ENCODE measurements at regions of chr15 and their contacts with region 1.

Region 1: GRCh38 chr15:49620658-49621368 is at the starts of genes DTWD1 and FAM227B:
- DNase-seq: peak; percentile 99
- H3K4me3 ChIP-seq: peak within 1 kb of the TSS; percentile 70 to 91 (median 76)
- H3K27ac ChIP-seq: peak within 1 kb of the TSS; percentile 90 to 94 (median 92)
- H3K4me1 ChIP-seq: peaks cover 0 to 35% (median 23%) of the 10 kb centered on the region in 4 donors
- H3K27me3 ChIP-seq: no peaks in the 10 kb centered on the region
- CTCF ChIP-seq: no peak
- EP300 ChIP-seq: peak in 1 of 4 donors; percentile 68
- POLR2A ChIP-seq: peak; percentile 84 to 92
- total RNA-seq, gene DTWD1: 22.7 to 39.8 (median 33.7) TPM
- total RNA-seq, gene FAM227B: 11.1 to 21.1 (median 15.0) TPM

Region 2: GRCh38 chr15:49235446-49236124 is 385.2 kb before region 1 on chr15:
- intact Hi-C with region 1: loop called (anchors 5 kb)
- DNase-seq: peak; percentile 78
- H3K4me3 ChIP-seq: no peak overlapping the region
- H3K27ac ChIP-seq: peak overlapping the region; percentile 10 to 78 (median 68)
- H3K4me1 ChIP-seq: peaks cover 0 to 55% (median 45%) of the 10 kb centered on the region in 4 donors
- H3K27me3 ChIP-seq: no peaks in the 10 kb centered on the region
- CTCF ChIP-seq: peak; percentile 58 to 83 (median 66)
- EP300 ChIP-seq: no peak
- POLR2A ChIP-seq: no peak

Region 3: GRCh38 chr15:49669288-49669687 is 48.5 kb after region 1 on chr15:
- intact Hi-C with region 1: no loop called
- DNase-seq: no peak
- H3K4me3 ChIP-seq: no peak overlapping the region
- H3K27ac ChIP-seq: no peak overlapping the region
- H3K4me1 ChIP-seq: peaks cover 0 to under 1% (median 0%) of the 10 kb centered on the region in 4 donors
- H3K27me3 ChIP-seq: no peaks in the 10 kb centered on the region
- CTCF ChIP-seq: no peak
- EP300 ChIP-seq: no peak
- POLR2A ChIP-seq: no peak

Region 4: GRCh38 chr15:49741712-49742111 is 120.9 kb after region 1 on chr15:
- intact Hi-C with region 1: no loop called
- DNase-seq: no peak
- H3K4me3 ChIP-seq: no peak overlapping the region
- H3K27ac ChIP-seq: no peak overlapping the region
- H3K4me1 ChIP-seq: no peaks in the 10 kb centered on the region
- H3K27me3 ChIP-seq: no peaks in the 10 kb centered on the region
- CTCF ChIP-seq: no peak
- EP300 ChIP-seq: no peak
- POLR2A ChIP-seq: no peak

Region 5: DNA sequence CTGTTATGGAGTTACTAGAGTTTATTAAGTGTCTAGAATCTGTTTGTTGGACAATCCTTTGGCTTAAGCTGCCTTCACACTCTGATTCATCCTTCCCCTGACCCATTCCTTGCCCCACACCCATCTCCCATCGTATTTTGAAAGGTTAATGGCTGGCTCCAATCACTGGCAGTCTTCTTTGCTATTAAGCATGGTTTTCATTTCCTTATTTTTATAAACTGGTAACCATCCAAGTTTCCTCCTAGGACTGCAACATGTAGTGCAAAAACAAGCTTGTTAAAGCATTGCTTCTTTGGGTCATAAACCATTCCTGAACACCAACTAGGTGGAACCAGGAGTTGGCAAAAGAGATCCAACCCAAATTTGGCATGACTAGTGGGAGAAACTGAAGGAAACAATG is 148.4 kb after region 1 on chr15:
- intact Hi-C with region 1: loop called (anchors 5 kb)
- DNase-seq: no peak
- H3K4me3 ChIP-seq: no peak overlapping the region
- H3K27ac ChIP-seq: peak overlapping the region in 3 of 4 donors; percentile 27 to 52 (median 36)
- H3K4me1 ChIP-seq: peaks cover 0 to 13% (median 3%) of the 10 kb centered on the region in 4 donors
- H3K27me3 ChIP-seq: no peaks in the 10 kb centered on the region
- CTCF ChIP-seq: no peak
- EP300 ChIP-seq: no peak
- POLR2A ChIP-seq: no peak

Region 6: GRCh38 chr15:49901996-49902684 is 281.3 kb after region 1 on chr15:
- intact Hi-C with region 1: loop called (anchors 5 kb)
- DNase-seq: no peak
- H3K4me3 ChIP-seq: no peak overlapping the region
- H3K27ac ChIP-seq: peak overlapping the region; percentile 65 to 77 (median 73)
- H3K4me1 ChIP-seq: peaks cover 0 to 60% (median 50%) of the 10 kb centered on the region in 4 donors
- H3K27me3 ChIP-seq: no peaks in the 10 kb centered on the region
- CTCF ChIP-seq: peak in 1 of 4 experiments; percentile 17
- EP300 ChIP-seq: no peak
- POLR2A ChIP-seq: no peak

Region 7: GRCh38 chr15:50057905-50058639 is 437.3 kb after region 1 on chr15:
- intact Hi-C with region 1: loop called (anchors 2 kb)
- DNase-seq: no peak
- H3K4me3 ChIP-seq: no peak overlapping the region
- H3K27ac ChIP-seq: peak overlapping the region; percentile 52 to 61 (median 56)
- H3K4me1 ChIP-seq: peaks cover 0 to 43% (median 30%) of the 10 kb centered on the region in 4 donors
- H3K27me3 ChIP-seq: no peaks in the 10 kb centered on the region
- CTCF ChIP-seq: no peak
- EP300 ChIP-seq: no peak
- POLR2A ChIP-seq: no peak

Region 8: GRCh38 chr15:50077651-50078050 is 456.8 kb after region 1 on chr15:
- intact Hi-C with region 1: no loop called
- DNase-seq: no peak
- H3K4me3 ChIP-seq: no peak overlapping the region
- H3K27ac ChIP-seq: peak overlapping the region in 2 of 4 donors; percentile 39 to 46
- H3K4me1 ChIP-seq: peaks cover 0 to 12% (median 9%) of the 10 kb centered on the region in 4 donors
- H3K27me3 ChIP-seq: no peaks in the 10 kb centered on the region
- CTCF ChIP-seq: no peak
- EP300 ChIP-seq: no peak
- POLR2A ChIP-seq: no peak

Measured in sigmoid colon (tissue), 7 donors.